T-cell (primary cell): ENCODE measurements at regions of chr17 and their contacts with region 1.

Region 1: GRCh38 chr17:75652915-75653549 is 13.9 kb downstream of the RECQL5 start:
- DNase-seq: peak in 18 of 35 experiments; percentile 14 to 53 (median 18)
- ATAC-seq: peak; percentile 60 to 75 (median 68)
- H3K4me3 ChIP-seq: no peak overlapping the region
- H3K4me3 Mint-ChIP-seq: no peak overlapping the region
- H3K27ac ChIP-seq: no peak overlapping the region
- H3K27ac Mint-ChIP-seq: peak overlapping the region in 1 of 2 donors; percentile 57
- H3K4me1 ChIP-seq: no peaks in the 10 kb centered on the region
- H3K4me1 Mint-ChIP-seq: peaks cover 4 to 7% (median 6%) of the 10 kb centered on the region in 3 donors
- H3K27me3 ChIP-seq: no peaks in the 10 kb centered on the region
- H3K27me3 Mint-ChIP-seq: no peaks in the 10 kb centered on the region

Region 2: DNA sequence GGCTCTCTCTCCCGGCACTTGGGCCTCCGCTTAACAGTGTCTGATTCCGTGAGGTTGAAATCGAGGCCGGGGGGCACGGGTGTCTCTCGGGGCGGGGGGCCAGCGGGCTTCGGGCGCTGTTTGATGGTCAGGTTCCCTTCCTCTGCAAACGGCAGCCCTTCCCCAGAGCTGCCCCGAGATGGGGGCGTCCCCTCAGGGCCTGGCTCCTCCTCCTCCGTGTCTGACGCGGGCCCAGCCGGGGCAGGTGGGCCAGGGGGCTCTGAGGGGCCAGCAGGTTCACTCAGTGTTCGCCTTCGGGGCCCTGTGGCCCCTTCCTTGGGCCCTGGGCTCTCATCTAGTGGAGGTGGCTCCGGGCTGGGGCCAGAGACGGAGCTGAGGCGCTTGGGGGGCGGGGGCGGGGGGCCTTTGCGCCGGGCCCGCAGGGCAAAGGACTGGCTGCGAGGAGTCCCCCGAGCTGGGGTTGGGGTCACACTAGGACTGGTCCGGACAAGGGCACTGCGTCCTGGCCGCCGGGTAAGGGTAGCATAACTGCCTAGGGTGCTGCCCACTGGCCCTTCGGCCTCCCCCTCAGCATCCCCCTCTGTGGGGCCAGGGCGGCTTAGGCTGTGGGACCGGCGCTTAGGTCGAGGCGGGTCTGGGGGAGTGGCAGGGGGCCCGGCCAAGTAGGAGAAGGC is 150.8 kb before region 1 on chr17:
- CTCF ChIA-PET with region 1: interaction called in 1 of 2 experiments, 11 read pairs
- POLR2A ChIA-PET with region 1: no interaction called
- DNase-seq: no peak
- ATAC-seq: no peak
- H3K4me3 ChIP-seq: no peak overlapping the region
- H3K4me3 Mint-ChIP-seq: no peak overlapping the region
- H3K27ac ChIP-seq: no peak overlapping the region
- H3K27ac Mint-ChIP-seq: no peak overlapping the region
- H3K4me1 ChIP-seq: peaks cover 2 to 26% of the 10 kb centered on the region in 2 experiments
- H3K4me1 Mint-ChIP-seq: peaks cover 2 to 8% (median 7%) of the 10 kb centered on the region in 3 donors
- H3K27me3 ChIP-seq: peaks cover 0 to 11% of the 10 kb centered on the region in 2 experiments
- H3K27me3 Mint-ChIP-seq: no peaks in the 10 kb centered on the region

Region 3: GRCh38 chr17:75707131-75707571 is 54.1 kb after region 1 on chr17:
- CTCF ChIA-PET with region 1: no interaction called
- POLR2A ChIA-PET with region 1: no interaction called
- DNase-seq: no peak
- ATAC-seq: no peak
- H3K4me3 ChIP-seq: no peak overlapping the region
- H3K4me3 Mint-ChIP-seq: no peak overlapping the region
- H3K27ac ChIP-seq: no peak overlapping the region
- H3K27ac Mint-ChIP-seq: no peak overlapping the region
- H3K4me1 ChIP-seq: no peaks in the 10 kb centered on the region
- H3K4me1 Mint-ChIP-seq: no peaks in the 10 kb centered on the region
- H3K27me3 ChIP-seq: no peaks in the 10 kb centered on the region
- H3K27me3 Mint-ChIP-seq: no peaks in the 10 kb centered on the region

Region 4: DNA sequence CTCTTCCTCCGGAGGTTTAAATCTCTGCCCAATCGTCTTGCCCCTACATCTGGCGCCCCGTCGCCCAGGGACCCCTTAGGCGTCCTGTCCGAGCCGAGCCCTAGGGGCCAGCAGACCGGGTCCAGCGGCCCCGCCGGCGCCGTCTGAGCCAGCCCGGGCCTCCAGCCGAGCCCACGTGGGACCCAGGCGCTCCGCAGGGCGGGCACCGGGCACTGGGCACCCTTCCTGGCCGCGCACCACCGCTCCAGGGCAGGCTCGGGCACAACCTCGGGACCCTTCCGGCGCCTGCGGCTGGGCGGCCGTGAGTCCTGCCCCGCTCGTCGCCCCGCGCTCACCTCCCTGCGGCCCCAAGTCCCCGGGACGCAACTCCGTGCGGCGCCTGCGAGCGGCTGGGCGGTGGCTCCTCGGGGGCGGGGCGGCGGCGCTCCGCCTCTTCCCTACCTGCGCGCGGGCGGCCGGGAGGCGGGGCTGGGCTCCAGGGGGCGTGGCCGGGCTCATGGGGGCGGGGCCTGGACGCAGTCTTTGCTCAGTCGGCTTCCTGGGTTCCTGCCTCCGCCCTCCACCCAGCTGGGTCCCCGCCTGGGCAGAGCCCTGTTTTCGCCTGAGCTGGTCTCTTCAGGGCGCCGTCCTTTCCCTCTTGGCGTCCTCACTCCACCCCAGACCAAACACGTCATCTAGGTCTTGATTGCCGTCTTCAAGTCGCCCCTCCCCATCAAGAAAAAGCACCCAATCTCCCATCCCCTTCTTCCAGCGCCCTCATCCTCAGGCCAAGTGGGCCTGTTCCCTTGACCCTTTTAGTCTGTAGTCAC is 848.2 kb after region 1 on chr17 and contains the start of gene RHBDF2:
- CTCF ChIA-PET with region 1: no interaction called
- POLR2A ChIA-PET with region 1: no interaction called
- DNase-seq: peak; percentile 81 to 99 (median 94)
- ATAC-seq: peak; percentile 92 to 99 (median 93)
- H3K4me3 ChIP-seq: peak within 1 kb of the TSS; percentile 69 to 79
- H3K4me3 Mint-ChIP-seq: peak within 1 kb of the TSS; percentile 82 to 90 (median 83)
- H3K27ac ChIP-seq: peak within 1 kb of the TSS; percentile 79
- H3K27ac Mint-ChIP-seq: peak within 1 kb of the TSS; percentile 98
- H3K4me1 ChIP-seq: peaks cover 3 to 56% of the 10 kb centered on the region in 2 experiments
- H3K4me1 Mint-ChIP-seq: peaks cover 40 to 60% (median 48%) of the 10 kb centered on the region in 3 donors
- H3K27me3 ChIP-seq: peaks cover 0 to 6% of the 10 kb centered on the region in 2 experiments
- H3K27me3 Mint-ChIP-seq: no peaks in the 10 kb centered on the region
- total RNA-seq, gene RHBDF2: 35.2 to 99.0 (median 74.0) TPM